ENCODE measurements at regions of chr1 and their contacts with region 1.

Region 1: GRCh38 chr1:230917284-230918135 is 49.2 kb upstream of the C1orf198 start:
- DNase-seq: peak; percentile 86
- H3K4me3 Mint-ChIP-seq: no peak overlapping the region
- H3K27ac Mint-ChIP-seq: no peak overlapping the region
- H3K4me1 Mint-ChIP-seq: peaks cover 5% of the 10 kb centered on the region
- H3K27me3 Mint-ChIP-seq: no peaks in the 10 kb centered on the region

Region 2: GRCh38 chr1:230891413-230891812 is 26.1 kb before region 1 on chr1:
- CTCF ChIA-PET with region 1: no interaction called
- intact Hi-C with region 1: no loop called
- DNase-seq: no peak
- H3K4me3 Mint-ChIP-seq: no peak overlapping the region
- H3K27ac Mint-ChIP-seq: no peak overlapping the region
- H3K4me1 Mint-ChIP-seq: no peaks in the 10 kb centered on the region
- H3K27me3 Mint-ChIP-seq: peaks cover 4% of the 10 kb centered on the region

Region 3: DNA sequence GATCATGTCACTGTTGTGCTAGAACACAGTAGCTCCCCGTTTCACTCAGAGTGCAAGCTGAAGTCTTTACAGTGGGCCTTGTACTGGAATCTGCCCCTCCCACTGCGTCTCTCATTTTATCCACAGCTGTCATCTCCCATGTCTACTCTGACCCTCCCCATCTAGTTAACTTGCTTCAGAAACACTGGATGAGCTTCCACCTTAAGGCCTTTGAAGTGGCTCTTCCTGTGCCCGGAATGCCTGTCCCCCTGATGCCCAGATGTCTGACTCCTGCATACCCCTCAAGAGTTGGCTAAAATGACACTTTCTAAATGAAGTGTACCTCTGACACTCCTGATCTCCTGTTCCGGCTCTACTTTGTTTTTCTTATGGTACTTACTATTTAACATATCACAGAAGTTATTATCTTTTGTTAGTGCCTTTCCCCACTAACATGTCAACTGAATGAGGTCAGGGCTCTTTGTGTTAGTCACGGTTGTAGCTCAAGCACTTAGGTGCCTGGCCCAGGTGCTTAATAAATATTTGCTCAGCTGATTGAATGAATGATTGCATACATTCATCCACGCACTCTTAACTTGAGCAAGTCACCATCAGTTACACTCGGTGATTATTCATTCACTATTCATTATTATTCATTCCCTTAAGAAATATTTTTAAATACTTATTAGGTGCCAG is 74.7 kb after region 1 on chr1:
- CTCF ChIA-PET with region 1: no interaction called
- intact Hi-C with region 1: no loop called
- DNase-seq: no peak
- H3K4me3 Mint-ChIP-seq: no peak overlapping the region
- H3K27ac Mint-ChIP-seq: no peak overlapping the region
- H3K4me1 Mint-ChIP-seq: peaks cover 1% of the 10 kb centered on the region
- H3K27me3 Mint-ChIP-seq: no peaks in the 10 kb centered on the region

Region 4: GRCh38 chr1:231091831-231092301 is 174.4 kb after region 1 on chr1:
- CTCF ChIA-PET with region 1: interaction called, 8 read pairs
- intact Hi-C with region 1: loop called (anchors 1 kb)
- DNase-seq: peak; percentile 56
- H3K4me3 Mint-ChIP-seq: no peak overlapping the region
- H3K27ac Mint-ChIP-seq: no peak overlapping the region
- H3K4me1 Mint-ChIP-seq: no peaks in the 10 kb centered on the region
- H3K27me3 Mint-ChIP-seq: peaks cover 18% of the 10 kb centered on the region

Region 5: DNA sequence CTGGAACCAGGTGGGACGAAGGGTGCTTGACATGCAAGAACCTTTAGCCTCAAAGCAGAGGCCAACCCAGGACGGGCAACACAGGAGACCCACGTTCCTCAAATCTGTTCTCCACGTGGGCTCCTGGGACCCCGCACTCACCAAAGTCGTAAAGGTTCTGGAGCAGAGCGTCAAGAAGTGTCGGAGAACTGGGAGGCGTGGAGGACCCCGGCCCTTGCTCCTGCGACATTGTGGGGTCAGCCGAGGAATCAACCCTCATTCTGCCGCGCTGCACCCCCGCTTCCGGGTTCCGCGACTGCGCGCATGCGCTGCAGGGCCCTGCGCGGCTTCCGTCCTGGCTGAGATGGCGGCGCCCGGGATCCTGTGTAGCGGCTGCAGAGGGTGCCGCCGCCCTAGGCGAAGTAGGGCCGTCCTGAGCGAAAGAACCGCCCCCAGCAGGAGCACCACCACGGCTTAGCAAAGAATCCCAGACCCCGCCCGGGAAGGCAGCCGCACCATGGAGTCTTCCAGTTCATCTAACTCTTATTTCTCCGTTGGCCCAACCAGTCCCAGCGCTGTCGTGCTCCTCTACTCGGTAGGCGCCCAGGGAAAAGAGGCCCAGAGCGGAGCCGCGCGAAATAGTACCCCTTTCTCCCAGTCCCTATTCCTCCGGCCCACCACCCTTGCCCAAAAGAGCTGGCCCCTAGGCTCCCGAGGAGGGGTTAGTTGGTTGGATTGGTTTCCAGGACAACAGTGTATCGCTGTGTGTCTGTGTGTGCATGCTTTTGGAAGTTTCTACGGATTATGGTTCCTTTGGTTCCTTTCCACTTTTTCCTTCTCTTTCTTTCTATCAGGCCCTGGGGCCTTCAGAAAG is 323.6 kb after region 1 on chr1 and contains the start of gene GNPAT:
- CTCF ChIA-PET with region 1: no interaction called
- intact Hi-C with region 1: loop called (anchors 1 kb)
- DNase-seq: peak; percentile 90
- H3K4me3 Mint-ChIP-seq: peak within 1 kb of the TSS; percentile 97
- H3K27ac Mint-ChIP-seq: peak within 1 kb of the TSS; percentile 82
- H3K4me1 Mint-ChIP-seq: peaks cover 58% of the 10 kb centered on the region
- H3K27me3 Mint-ChIP-seq: no peaks in the 10 kb centered on the region
- total RNA-seq, gene GNPAT: 60.4 to 62.0 TPM